ENCODE measurements at regions of chr5 and their contacts with region 1.

Region 1: GRCh38 chr5:67156976-67157583 is 39.5 kb downstream of the CD180 start:
- DNase-seq: peak; percentile 61
- H3K4me3 Mint-ChIP-seq: no peak overlapping the region
- H3K27ac Mint-ChIP-seq: peak overlapping the region; percentile 17
- H3K4me1 Mint-ChIP-seq: peaks cover 54% of the 10 kb centered on the region
- H3K27me3 Mint-ChIP-seq: no peaks in the 10 kb centered on the region

Region 2: DNA sequence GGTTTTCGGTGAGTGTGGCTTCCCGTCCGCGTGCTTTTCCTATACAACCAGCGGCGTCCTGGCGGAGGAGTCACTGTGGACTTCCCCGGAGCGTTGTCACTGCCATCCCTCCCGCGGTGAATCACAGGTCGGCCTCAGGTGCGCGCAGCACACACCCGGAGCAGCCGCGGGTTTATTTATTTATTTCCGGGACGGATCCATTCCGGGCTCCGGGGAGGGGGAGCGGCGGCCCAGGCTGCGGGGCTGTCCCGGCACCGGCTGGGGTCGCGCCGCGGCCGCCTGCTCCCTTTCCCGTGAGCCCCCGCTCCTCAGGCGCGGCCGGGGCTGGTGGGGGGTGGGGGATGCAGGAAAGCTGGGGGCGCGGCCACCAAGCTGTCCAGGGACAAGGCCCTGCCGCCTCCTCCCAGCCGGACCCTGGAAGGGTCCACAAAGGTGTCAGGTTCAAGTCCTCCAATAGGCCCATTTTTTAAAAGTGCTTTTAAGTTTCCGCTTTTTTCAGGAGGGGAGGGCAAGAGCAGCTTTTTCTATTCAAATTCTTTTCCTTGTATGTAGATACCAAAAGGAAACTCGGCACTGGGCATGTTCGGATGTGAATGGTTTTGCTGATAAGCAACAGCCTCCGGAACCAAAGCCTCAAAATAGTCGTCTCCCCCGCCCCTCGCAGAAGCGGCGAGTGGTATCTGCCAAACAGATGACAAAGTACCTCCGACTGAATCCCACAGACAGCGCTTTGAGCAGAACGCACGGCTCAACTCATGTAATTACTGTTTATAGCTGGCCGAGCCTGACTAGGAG is 152.9 kb before region 1 on chr5:
- CTCF ChIA-PET with region 1: no interaction called
- POLR2A ChIA-PET with region 1: interaction called, 25 read pairs
- DNase-seq: peak; percentile 91
- H3K4me3 Mint-ChIP-seq: peak overlapping the region; percentile 85
- H3K27ac Mint-ChIP-seq: peak overlapping the region; percentile 87
- H3K4me1 Mint-ChIP-seq: peaks cover 50% of the 10 kb centered on the region
- H3K27me3 Mint-ChIP-seq: no peaks in the 10 kb centered on the region

Region 3: DNA sequence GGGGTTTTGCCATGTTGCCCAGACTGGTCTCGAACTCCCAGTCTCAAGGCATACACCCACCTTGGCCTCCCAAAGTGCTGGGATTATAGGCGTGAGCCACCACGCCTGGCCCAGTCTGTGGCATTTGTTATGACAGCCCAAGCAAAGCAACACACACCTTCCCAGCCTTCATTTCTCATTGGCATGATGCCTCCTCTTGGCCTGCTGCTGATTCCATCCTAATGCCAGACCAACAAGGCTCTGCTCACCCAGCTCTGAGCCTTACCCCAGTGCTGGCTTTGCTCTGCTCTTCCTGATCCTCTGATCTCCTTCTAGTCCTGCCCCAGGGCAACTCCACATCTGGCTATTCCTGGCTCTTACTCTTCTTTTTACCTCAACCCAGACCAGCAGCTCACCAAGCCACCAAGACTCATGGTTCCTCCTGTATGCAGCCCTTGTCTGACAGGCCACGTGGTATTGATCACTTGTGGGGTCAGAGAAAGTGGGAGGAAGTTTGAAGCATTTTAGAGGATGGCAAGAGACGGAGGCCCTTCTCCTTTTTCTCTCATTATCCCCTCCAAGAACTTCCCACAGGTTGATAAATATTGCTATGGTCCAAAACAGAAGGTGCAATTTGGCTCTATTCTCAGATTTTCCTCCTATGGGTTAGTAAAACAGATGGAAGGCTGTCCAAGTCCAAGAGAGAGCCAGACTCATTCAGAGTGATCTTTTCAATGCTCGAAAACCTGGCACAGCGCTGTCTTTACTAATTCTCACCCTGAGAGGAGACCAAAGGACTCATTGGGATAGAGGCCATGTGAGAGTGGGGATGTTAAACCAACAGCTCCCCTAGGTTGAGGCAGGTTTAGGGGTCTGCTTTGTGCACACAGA is 38.6 kb after region 1 on chr5:
- CTCF ChIA-PET with region 1: no interaction called
- POLR2A ChIA-PET with region 1: no interaction called
- DNase-seq: no peak
- H3K4me3 Mint-ChIP-seq: no peak overlapping the region
- H3K27ac Mint-ChIP-seq: no peak overlapping the region
- H3K4me1 Mint-ChIP-seq: peaks cover 40% of the 10 kb centered on the region
- H3K27me3 Mint-ChIP-seq: no peaks in the 10 kb centered on the region

Region 4: DNA sequence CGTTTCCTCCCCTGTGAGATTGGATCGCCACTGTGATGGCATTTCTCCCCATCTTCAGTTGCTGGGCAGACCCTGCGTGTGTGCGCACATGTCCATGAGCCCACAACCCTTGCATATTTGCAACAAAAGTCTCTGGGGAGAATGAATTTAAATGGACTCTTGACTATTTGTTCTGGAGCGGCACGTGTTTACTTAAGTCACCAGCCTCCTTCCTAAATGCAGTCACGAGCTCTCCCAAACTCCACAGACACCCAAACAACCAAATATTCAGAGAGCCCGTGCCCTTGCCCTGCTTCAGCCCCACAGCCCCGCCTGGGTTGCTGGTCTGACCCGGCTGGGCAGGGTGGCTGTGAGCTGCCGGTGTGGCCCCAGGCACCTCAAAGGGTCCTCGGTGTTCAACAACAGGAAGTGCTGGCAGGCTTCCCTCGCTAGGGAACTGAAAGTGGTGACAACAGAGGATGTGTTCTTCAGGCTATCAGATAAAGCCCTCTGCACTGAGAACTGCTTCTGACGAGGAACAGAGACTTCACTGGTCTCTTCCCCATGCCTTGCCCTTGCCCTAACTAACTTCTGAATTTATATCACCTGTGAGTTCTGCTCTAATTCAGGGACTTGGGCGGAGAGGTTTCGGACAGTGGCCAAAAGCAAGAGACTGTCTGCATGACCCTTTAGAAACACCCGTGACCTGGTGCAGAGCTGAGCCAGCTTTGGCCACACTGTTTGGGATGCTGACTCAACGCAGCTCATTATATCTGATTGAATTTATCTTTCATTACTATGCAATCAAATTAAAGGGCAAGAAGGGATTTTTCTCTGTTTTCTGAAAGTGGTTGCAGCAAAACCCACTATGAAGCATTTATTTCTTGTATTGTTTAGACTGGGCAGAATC is 58.7 kb after region 1 on chr5:
- CTCF ChIA-PET with region 1: interaction called, 519 read pairs
- POLR2A ChIA-PET with region 1: interaction called, 863 read pairs
- DNase-seq: peak; percentile 84
- H3K4me3 Mint-ChIP-seq: peak overlapping the region; percentile 75
- H3K27ac Mint-ChIP-seq: peak overlapping the region; percentile 99
- H3K4me1 Mint-ChIP-seq: peaks cover 67% of the 10 kb centered on the region
- H3K27me3 Mint-ChIP-seq: no peaks in the 10 kb centered on the region

Region 5: DNA sequence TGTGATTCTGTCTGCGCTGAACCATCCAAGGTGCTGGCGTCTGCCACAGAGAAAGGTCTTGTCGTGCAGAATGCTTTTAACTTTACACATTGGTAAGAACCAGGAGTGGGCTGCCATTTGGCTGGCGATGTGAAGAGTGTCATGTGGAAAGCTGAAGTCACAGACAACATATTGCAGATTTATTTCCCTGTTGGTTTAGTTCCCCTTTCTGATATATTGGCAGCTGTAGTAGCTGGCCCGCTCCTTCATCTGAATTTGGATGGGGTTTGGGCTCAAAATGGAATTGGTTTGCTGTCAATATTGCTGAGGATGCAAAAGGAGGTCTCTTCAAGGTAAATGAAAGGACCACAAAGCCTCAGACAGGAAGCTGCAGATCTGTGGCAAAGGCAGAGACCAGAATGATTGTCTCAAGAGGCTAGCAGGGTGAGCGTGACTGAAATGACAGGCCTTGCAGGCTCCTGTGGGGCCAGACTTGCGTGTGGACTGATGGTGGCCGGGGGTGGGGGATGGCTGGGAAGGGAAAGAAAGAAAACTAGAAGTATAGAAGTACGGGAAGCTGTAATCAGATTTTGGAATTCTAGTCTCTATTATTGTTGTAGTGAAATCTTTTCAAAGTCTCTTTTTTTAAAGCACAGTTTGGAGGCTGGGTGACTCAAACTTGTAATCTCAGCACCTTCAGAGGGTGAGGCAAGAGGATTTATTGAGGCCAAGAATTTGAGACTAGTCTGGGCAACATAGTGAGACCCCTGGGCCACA is 64.6 kb after region 1 on chr5:
- CTCF ChIA-PET with region 1: interaction called, 519 read pairs
- POLR2A ChIA-PET with region 1: interaction called, 70 read pairs
- DNase-seq: peak; percentile 82
- H3K4me3 Mint-ChIP-seq: peak overlapping the region; percentile 46
- H3K27ac Mint-ChIP-seq: peak overlapping the region; percentile 95
- H3K4me1 Mint-ChIP-seq: peaks cover 65% of the 10 kb centered on the region
- H3K27me3 Mint-ChIP-seq: no peaks in the 10 kb centered on the region

Region 6: DNA sequence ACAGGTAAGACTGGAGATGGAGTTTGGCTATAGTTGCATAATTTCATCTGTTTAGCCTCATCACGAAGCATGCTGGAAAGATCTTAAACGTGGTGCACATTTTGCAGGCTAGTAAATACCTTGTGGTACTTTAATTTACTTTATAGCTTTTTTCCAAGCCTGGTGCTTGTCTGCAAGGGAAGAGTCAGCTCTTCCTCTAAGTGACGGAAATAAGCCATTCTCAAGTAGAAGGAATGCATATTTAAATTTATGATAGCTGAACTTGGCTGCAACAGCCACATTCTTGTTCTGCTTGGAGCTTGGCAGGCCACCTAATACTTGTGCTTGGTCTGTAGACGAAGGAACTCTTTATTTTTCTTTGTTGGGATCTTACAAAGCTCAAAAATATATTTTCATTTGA is 870.4 kb after region 1 on chr5:
- CTCF ChIA-PET with region 1: no interaction called
- POLR2A ChIA-PET with region 1: no interaction called
- DNase-seq: no peak
- H3K4me3 Mint-ChIP-seq: no peak overlapping the region
- H3K27ac Mint-ChIP-seq: no peak overlapping the region
- H3K4me1 Mint-ChIP-seq: no peaks in the 10 kb centered on the region
- H3K27me3 Mint-ChIP-seq: no peaks in the 10 kb centered on the region

Measured in activated CD4-positive, alpha-beta memory T cell treated with anti-CD3 and anti-CD28 coated beads, Interleukin-2, amount 10 ng/mL, durations not matched to agents 7 days and 5 days (primary cell).